ENCODE measurements at regions of chr20 and their contacts with region 1.

Region 1: DNA sequence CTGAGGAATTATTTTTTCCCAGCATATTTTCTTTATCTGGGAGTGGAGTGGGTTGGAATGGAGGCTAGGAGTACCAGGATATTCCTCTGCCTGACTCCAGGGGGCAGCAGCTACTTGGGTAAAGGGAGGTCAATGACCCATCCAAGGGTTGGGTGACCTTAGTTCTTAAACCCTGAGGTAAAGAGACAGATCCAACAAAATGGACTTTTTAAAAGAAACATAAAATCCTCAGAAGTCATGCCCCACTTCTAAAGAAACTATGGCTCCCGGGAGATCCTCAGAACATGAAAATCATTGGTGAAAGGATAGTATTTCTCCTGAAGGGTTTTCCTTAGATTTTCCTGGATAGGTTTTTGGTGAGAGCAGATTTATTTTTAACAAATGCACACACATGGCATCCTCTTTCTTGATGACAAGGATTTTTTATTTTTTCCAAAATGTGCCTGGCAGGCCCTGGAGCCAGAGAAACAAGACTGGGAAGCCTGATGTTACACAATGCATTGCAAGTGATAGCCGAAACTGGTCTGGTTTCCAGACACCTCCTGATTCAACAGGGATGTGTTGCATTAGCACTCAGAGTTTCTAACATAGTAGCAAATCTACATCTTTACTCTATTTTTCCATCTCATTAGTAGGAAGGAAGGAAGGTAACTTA is 240.9 kb upstream of the BTBD3 start:
- DNase-seq: peak; percentile 51
- H3K4me3 ChIP-seq: no peak overlapping the region
- H3K27ac ChIP-seq: no peak overlapping the region
- H3K4me1 ChIP-seq: no peaks in the 10 kb centered on the region
- H3K27me3 ChIP-seq: peaks cover 0 to 5% of the 10 kb centered on the region in 2 experiments
- CTCF ChIP-seq: peak; percentile 70 to 75
- POLR2A ChIP-seq: no peak

Region 2: DNA sequence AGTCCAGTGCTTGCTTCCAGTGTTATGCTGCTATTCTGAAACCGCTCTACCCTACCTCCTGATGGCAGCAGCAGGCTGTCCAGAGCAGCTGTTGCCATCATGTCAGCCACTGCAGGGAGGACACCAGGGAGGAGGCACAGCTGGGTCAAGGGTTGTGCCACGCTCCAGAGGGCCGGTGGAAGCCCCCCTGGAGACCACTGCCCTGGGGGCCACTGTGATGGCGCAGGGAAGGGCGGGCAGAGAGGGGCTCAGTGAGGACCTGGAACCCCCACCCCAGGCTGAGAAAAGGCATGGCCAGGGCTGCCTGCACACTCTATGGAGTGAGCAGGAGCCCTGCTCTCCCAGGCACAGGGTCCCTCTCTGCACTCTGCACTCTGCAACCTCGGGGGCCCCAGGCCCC is 30.4 kb before region 1 on chr20:
- CTCF ChIA-PET with region 1: no interaction called
- POLR2A ChIA-PET with region 1: no interaction called
- dilution Hi-C with region 1: no loop called
- intact Hi-C with region 1: no loop called
- DNase-seq: no peak
- H3K4me3 ChIP-seq: no peak overlapping the region
- H3K27ac ChIP-seq: no peak overlapping the region
- H3K4me1 ChIP-seq: no peaks in the 10 kb centered on the region
- H3K27me3 ChIP-seq: no peaks in the 10 kb centered on the region
- CTCF ChIP-seq: no peak
- POLR2A ChIP-seq: no peak

Region 3: GRCh38 chr20:13105864-13106457 is 1429.2 kb after region 1 on chr20:
- CTCF ChIA-PET with region 1: no interaction called
- POLR2A ChIA-PET with region 1: no interaction called
- dilution Hi-C with region 1: no loop called
- intact Hi-C with region 1: loop called (anchors 5 kb)
- DNase-seq: peak; percentile 34
- H3K4me3 ChIP-seq: no peak overlapping the region
- H3K27ac ChIP-seq: no peak overlapping the region
- H3K4me1 ChIP-seq: no peaks in the 10 kb centered on the region
- H3K27me3 ChIP-seq: peaks cover 0 to 7% of the 10 kb centered on the region in 2 experiments
- CTCF ChIP-seq: peak; percentile 29 to 49
- POLR2A ChIP-seq: no peak